Testis (tissue), 5 donors: ENCODE measurements at regions of chr3 and their contacts with region 1.

Region 1: DNA sequence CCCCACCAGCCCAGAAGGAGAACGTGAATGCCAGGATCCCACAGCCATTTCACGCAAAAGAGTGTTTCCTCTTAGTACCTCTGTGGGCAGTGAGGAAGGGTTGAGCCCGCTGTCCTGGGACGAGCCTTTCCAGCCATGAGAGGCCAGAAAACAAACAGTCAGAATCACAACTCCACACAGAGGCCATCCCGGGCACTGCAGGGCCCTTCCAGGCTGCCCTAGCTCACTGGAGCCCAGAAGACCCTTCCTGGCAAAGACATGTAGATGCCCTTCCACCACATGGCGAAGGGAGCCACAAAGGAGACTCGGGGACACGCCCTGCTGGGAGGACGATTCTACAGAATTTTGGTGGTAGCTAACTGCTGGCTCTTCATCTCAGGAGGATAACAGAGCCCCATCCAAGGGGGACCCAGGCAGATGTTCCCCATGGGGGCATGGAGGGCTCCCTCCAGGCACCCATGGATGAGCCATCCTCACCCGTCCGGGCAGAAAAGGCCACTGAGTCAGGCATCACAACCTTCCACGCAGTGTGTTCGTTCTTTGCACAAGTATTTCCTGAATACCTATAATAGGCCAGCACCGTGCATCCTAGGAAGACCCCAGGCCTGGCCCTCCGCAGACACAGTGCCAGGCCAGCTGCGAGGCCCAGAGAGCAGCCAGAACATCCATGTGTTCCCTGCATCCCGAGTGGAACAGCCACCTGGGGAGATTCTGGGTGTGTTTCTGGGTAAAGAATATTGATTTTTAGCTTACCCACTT is 47.2 kb downstream of the SLC12A8 start:
- DNase-seq: peak; percentile 78
- H3K4me3 ChIP-seq: no peak overlapping the region
- H3K27ac ChIP-seq: no peak overlapping the region
- H3K4me1 ChIP-seq: no peaks in the 10 kb centered on the region
- H3K27me3 ChIP-seq: no peaks in the 10 kb centered on the region
- CTCF ChIP-seq: peak; percentile 43 to 65 (median 62)
- POLR2A ChIP-seq: no peak

Region 2: GRCh38 chr3:124995460-124995994 is 169.8 kb before region 1 on chr3:
- intact Hi-C with region 1: loop called (anchors 10 kb)
- DNase-seq: peak; percentile 65
- H3K4me3 ChIP-seq: no peak overlapping the region
- H3K27ac ChIP-seq: no peak overlapping the region
- H3K4me1 ChIP-seq: peaks cover 15% of the 10 kb centered on the region
- H3K27me3 ChIP-seq: no peaks in the 10 kb centered on the region
- CTCF ChIP-seq: peak; percentile 29 to 53 (median 46)
- POLR2A ChIP-seq: no peak